ENCODE measurements at regions of chrX and their contacts with region 1.

Region 1: GRCh38 chrX:154397819-154398724 is at the start of gene RPL10:
- DNase-seq: peak; percentile 86 to 89
- H3K4me3 ChIP-seq: peak within 1 kb of the TSS; percentile 82 to 99 (median 96)
- H3K27ac ChIP-seq: peak within 1 kb of the TSS; percentile 95
- H3K4me1 ChIP-seq: peaks cover 0 to 6% (median 0%) of the 10 kb centered on the region in 4 experiments; a peak in 2 of 7 replicates
- H3K27me3 ChIP-seq: no peaks in the 10 kb centered on the region
- CTCF ChIP-seq: no peak
- EP300 ChIP-seq: no peak
- POLR2A ChIP-seq: peak in 1 of 2 experiments; percentile 99; a peak in 2 of 3 replicates
- RAD21 ChIP-seq: no peak
- total RNA-seq, gene RPL10: 2,633 and 2,739 TPM in 2 replicates

Region 2: GRCh38 chrX:154348114-154348531 is 49.9 kb before region 1 on chrX:
- CTCF ChIA-PET with region 1: no interaction called
- POLR2A ChIA-PET with region 1: interaction called, 36 read pairs
- DNase-seq: no peak
- H3K4me3 ChIP-seq: no peak overlapping the region
- H3K27ac ChIP-seq: no peak overlapping the region
- H3K4me1 ChIP-seq: no peaks in the 10 kb centered on the region
- H3K27me3 ChIP-seq: no peaks in the 10 kb centered on the region
- CTCF ChIP-seq: no peak
- EP300 ChIP-seq: no peak
- POLR2A ChIP-seq: no peak
- RAD21 ChIP-seq: no peak

Region 3: GRCh38 chrX:154370882-154371770 is 26.9 kb before region 1 on chrX:
- CTCF ChIA-PET with region 1: interaction called, 20 read pairs
- POLR2A ChIA-PET with region 1: interaction called, 96 read pairs
- DNase-seq: peak; percentile 56 to 82
- H3K4me3 ChIP-seq: peak overlapping the region; percentile 82 to 96 (median 90)
- H3K27ac ChIP-seq: peak overlapping the region; percentile 97
- H3K4me1 ChIP-seq: peaks cover 0 to 18% (median 11%) of the 10 kb centered on the region in 4 experiments; a peak in 6 of 7 replicates
- H3K27me3 ChIP-seq: no peaks in the 10 kb centered on the region; a peak in 2 of 7 replicates
- CTCF ChIP-seq: no peak
- EP300 ChIP-seq: no peak
- POLR2A ChIP-seq: peak in 1 of 2 experiments; percentile 96; a peak in 2 of 3 replicates
- RAD21 ChIP-seq: no peak

Region 4: GRCh38 chrX:154411322-154411980 is 13.4 kb after region 1 on chrX and contains the start of gene TAFAZZIN:
- CTCF ChIA-PET with region 1: interaction called, 10 read pairs
- POLR2A ChIA-PET with region 1: interaction called, 124 read pairs
- DNase-seq: peak in 1 of 2 experiments; percentile 75
- H3K4me3 ChIP-seq: peak within 1 kb of the TSS; percentile 47 to 69 (median 62)
- H3K27ac ChIP-seq: peak within 1 kb of the TSS; percentile 1; the same call in 1 of the 2 replicates
- H3K4me1 ChIP-seq: peaks cover 2 to 11% (median 3%) of the 10 kb centered on the region in 4 experiments; a peak in 4 of 7 replicates
- H3K27me3 ChIP-seq: no peaks in the 10 kb centered on the region
- CTCF ChIP-seq: no peak
- EP300 ChIP-seq: no peak
- POLR2A ChIP-seq: peak in 1 of 2 experiments; percentile 16; a peak in 1 of 3 replicates
- RAD21 ChIP-seq: no peak
- total RNA-seq, gene TAFAZZIN: 23.9 and 25.3 TPM in 2 replicates

Region 5: GRCh38 chrX:154428176-154429010 is 30.3 kb after region 1 on chrX and contains the start of gene ATP6AP1:
- CTCF ChIA-PET with region 1: interaction called, 5 read pairs
- POLR2A ChIA-PET with region 1: interaction called, 31 read pairs
- DNase-seq: peak in 1 of 2 experiments; percentile 83
- H3K4me3 ChIP-seq: peak within 1 kb of the TSS; percentile 30 to 84 (median 56)
- H3K27ac ChIP-seq: no peak within 1 kb of the TSS
- H3K4me1 ChIP-seq: no peaks in the 10 kb centered on the region
- H3K27me3 ChIP-seq: no peaks in the 10 kb centered on the region
- CTCF ChIP-seq: no peak
- EP300 ChIP-seq: no peak
- POLR2A ChIP-seq: no peak; a peak in 1 of 3 replicates
- RAD21 ChIP-seq: no peak
- total RNA-seq, gene ATP6AP1: 44.6 and 46.7 TPM in 2 replicates

Region 6: DNA sequence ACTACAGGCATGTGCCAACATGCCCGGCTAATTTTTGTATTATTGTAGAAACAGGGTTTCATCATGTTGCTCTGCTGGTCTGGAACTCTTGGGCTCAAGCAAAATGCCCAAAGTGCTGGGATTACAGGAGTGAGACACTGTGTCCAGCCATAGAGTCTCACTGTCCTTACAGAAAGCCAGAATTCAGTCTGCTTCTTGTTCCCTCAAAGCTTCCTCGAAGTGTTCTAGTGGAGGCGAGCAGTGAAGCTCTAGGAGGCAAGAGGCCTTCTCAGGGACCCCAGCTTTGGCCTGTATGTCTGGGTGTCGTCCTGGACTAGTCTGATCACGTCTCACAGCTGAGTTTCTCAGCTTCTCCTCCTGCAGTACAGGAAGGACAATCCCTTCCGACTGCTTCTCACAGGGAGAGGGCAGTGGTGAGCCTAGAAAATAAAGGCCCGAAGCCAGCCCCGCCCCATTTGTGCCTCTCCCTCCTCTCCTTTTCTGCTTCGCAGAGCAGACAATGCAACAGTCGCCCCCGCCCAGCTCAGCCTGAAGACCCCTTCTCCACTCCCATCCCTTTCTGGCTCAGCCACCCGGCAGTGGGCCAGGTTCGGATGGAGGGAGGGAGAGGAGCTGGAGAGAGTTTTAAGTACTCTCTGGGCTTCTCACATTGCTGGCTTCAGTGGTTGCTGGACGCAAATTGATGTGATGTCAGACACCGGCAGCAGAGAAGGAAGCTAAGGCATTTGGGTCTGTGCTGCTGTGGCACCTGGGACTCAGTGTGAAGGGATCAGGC is 129.0 kb after region 1 on chrX:
- CTCF ChIA-PET with region 1: interaction called, 3 read pairs
- POLR2A ChIA-PET with region 1: interaction called, 26 read pairs
- DNase-seq: peak in 1 of 2 experiments; percentile 74
- H3K4me3 ChIP-seq: peak overlapping the region in 3 of 4 experiments; percentile 13 to 51 (median 18); a peak in 4 of 8 replicates
- H3K27ac ChIP-seq: no peak overlapping the region
- H3K4me1 ChIP-seq: 0 out of 7 replicates have a peak, but pooled peaks cover 0 to 3% (median 0%) of the 10 kb centered on the region in 4 experiments
- H3K27me3 ChIP-seq: peaks cover 0 to 11% (median 2%) of the 10 kb centered on the region in 4 experiments; a peak in 4 of 7 replicates
- CTCF ChIP-seq: peak in 2 of 3 experiments; percentile 40 to 50; a peak in 3 of 4 replicates
- EP300 ChIP-seq: no peak
- POLR2A ChIP-seq: peak in 1 of 2 experiments; percentile 23; a peak in 1 of 3 replicates
- RAD21 ChIP-seq: peak; percentile 10 to 34; a peak in 1 of 4 replicates

Measured in H1 (cell line).